Vagina (tissue), 2 donors: ENCODE measurements at regions of chr1 and their contacts with region 1.

Region 1: GRCh38 chr1:25997828-25998761 is at the start of gene PAFAH2:
- DNase-seq: peak; percentile 98
- H3K4me3 ChIP-seq: peak within 1 kb of the TSS; percentile 62 to 76
- H3K27ac ChIP-seq: peak within 1 kb of the TSS; percentile 84
- H3K4me1 ChIP-seq: peaks cover 20% of the 10 kb centered on the region
- H3K27me3 ChIP-seq: no peaks in the 10 kb centered on the region
- CTCF ChIP-seq: peak; percentile 93 to 100 (median 99)
- POLR2A ChIP-seq: no peak
- total RNA-seq, gene PAFAH2: 7.1 TPM

Region 2: DNA sequence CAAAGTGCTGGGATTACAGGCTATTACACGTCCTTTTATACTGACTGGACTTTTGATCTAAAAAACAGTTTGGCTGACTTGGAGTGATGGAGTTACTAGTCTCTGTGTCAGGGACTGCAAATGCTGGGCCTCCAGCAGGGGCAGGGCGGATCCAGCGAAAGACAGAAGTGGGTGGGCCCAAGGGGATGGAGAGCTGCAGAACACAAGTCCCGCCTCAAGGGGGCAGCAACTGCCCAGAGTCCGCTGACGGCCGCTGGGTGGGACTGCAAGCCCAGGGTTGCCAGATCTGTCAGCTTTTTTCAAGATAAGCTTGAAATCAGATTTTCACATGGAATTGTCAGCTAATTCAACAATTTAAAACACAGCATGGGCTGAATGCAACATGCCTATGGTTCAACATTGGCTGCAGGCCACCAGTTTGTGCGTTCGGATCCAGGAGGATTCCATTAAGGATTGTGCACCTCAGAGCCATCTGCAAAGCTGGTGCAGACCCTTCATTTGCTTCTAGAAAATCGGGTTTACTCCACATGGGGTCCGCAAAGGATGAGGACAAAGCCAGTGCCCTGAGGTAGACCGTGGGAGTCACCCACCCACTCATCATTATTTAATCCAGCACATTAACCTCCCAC is 102.6 kb before region 1 on chr1:
- intact Hi-C with region 1: loop called (anchors 2 kb)
- DNase-seq: no peak
- H3K4me3 ChIP-seq: no peak overlapping the region
- H3K27ac ChIP-seq: peak overlapping the region; percentile 52
- H3K4me1 ChIP-seq: peaks cover 46% of the 10 kb centered on the region
- H3K27me3 ChIP-seq: no peaks in the 10 kb centered on the region
- CTCF ChIP-seq: peak; percentile 79 to 97 (median 96)
- POLR2A ChIP-seq: no peak

Region 3: GRCh38 chr1:25904943-25905679 is 93.0 kb before region 1 on chr1:
- intact Hi-C with region 1: loop called (anchors 5 kb)
- DNase-seq: no peak
- H3K4me3 ChIP-seq: peak overlapping the region; percentile 70 to 73
- H3K27ac ChIP-seq: peak overlapping the region; percentile 88
- H3K4me1 ChIP-seq: peaks cover 27% of the 10 kb centered on the region
- H3K27me3 ChIP-seq: no peaks in the 10 kb centered on the region
- CTCF ChIP-seq: no peak
- POLR2A ChIP-seq: no peak